Activated CD4-positive, alpha-beta T cell treated with anti-CD3 and anti-CD28 coated beads for 36 hours (primary cell): ENCODE measurements at regions of chr7 and their contacts with region 1.

Region 1: DNA sequence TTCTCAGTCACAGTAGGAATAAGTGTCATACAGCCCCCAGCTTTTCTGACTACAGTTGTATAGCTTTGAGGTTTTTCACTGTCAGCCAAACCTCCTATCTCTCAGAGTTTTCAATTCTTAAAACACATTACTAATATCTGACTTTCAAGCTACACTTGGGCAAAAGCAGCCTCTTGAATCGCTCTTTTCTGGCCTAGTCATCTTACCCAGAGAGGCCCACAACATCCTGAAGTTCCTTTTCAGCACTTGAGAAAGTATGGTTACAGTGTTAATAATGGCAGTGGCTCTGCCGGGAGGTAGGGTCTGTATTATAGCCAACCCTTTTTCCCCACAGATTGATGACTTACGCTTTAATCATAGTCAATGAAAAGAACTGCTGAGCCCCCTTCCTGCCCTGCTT is 181.0 kb downstream of the LRRC4 start:
- DNase-seq: peak; percentile 61
- ATAC-seq: peak; percentile 95
- H3K4me3 Mint-ChIP-seq: no peak overlapping the region
- H3K27ac Mint-ChIP-seq: peak overlapping the region; percentile 78
- H3K4me1 Mint-ChIP-seq: peaks cover 50% of the 10 kb centered on the region
- H3K27me3 Mint-ChIP-seq: no peaks in the 10 kb centered on the region

Region 2: DNA sequence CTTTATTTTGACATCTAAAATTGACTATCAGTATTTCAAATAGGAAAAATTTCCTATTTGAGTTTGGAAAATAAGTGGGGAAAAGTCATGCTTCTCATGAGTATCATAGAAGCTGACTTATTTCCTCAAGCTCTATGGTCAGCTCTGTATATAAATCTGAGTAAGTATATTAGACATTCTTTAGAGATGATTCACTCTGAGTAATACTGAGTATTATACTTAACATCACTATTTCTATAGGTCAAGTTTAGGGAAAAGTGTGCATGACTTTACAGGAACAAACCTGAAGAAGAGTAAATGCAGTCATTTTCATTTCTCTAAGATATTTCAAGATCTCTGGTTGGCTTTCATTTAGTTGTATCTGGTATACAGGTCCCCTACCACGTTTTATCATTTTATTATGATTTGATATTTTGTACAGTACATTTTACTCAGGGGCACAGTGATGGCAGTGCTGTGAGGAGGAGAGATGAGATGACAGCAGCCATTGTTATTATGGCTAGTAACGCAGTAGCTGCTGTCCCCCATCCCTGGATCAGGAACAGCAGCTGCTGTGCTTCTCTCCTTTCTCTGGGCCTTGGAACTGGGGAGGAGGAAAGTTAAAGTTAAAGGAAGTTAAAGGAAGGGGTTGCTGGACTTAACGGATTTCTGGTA is 183.1 kb before region 1 on chr7:
- CTCF ChIA-PET with region 1: no interaction called
- POLR2A ChIA-PET with region 1: no interaction called
- intact Hi-C with region 1: no loop called
- DNase-seq: no peak
- ATAC-seq: peak; percentile 84
- H3K4me3 Mint-ChIP-seq: peak overlapping the region; percentile 28
- H3K27ac Mint-ChIP-seq: peak overlapping the region; percentile 93
- H3K4me1 Mint-ChIP-seq: peaks cover 54% of the 10 kb centered on the region
- H3K27me3 Mint-ChIP-seq: no peaks in the 10 kb centered on the region

Region 3: DNA sequence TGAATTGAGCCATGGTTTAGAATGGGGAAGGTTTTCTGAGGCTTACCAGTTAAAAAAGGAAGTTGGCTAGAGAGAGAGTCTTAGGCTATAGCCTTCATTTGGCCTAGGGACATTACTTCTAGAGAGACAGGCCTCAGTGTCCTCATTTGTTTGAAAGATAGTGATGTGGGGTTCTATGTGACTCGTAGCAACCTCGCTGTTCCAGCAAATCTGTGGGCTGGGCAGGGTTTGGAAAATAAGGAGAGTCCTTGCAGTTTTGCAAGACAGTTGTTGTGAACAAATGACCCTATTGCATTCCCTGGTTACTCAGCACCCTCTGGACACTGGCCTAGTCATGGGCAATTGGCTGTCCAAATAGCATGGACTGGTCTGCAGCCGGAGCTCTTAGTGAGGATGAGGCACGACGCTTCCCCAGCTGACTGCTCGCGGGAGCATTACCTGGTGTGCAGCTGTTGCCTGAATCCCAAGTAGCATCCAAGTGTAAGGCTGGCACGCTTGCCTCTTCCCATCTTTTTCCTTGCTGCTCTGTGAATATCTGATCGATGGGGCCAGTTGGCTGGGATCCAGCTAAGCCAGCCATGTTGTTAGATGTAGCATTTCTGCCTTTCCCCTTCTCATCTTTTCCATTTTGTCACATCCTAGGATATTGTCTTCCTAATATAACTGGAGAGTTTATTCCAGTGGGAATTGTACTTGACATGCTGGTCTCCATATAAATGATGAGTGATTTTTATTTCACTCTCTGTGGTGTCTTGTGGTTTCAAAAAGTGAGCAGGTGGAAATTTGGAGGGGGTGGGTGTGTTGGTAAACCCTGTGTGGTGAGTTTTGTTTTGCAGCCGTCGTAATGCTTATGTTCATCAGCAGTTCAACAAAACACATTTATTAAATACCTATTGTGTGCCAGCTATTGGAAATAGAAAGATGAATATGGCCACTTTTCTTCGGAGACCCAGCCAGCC is 98.4 kb before region 1 on chr7:
- CTCF ChIA-PET with region 1: no interaction called
- POLR2A ChIA-PET with region 1: no interaction called
- intact Hi-C with region 1: loop called in 1 of 2 experiments (anchors 2 kb)
- DNase-seq: peak; percentile 11
- ATAC-seq: no peak
- H3K4me3 Mint-ChIP-seq: no peak overlapping the region
- H3K27ac Mint-ChIP-seq: no peak overlapping the region
- H3K4me1 Mint-ChIP-seq: peaks cover 45% of the 10 kb centered on the region
- H3K27me3 Mint-ChIP-seq: no peaks in the 10 kb centered on the region

Region 4: DNA sequence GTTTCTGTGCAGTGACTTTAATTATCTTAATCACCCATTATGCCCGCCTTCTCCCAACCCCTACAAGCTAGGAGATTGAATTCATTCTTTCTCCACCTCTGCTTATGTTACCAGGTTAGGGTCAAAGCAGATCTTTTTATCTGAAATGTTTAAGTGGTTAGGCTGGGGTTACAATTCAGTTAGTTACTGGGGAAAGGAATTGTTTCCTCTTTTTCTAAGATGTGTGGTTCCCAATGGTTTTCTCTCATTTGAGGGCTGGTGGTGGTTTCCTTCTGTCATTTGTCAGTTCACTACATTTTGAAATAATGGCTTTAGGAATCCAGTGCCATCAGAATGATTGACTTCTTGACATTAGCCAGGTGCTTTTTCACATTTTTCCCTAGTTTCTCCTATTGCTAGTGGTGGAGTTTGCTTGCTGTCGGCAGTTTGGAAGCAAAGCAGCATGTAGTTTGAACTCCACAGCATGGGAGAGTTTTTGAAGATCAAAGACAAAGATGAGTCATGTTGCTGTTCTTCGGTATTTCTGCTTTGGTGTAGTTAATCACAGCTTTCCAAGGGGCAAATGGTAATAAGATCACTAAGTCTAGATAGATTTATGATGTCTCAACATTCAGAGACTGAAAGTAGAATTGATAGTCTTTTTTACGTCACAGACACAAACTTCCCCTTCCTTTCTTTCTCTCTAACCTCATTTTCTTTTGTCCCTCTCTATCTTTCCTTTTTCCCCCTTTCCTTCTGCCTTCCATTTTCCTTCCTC is 30.0 kb before region 1 on chr7:
- CTCF ChIA-PET with region 1: no interaction called
- POLR2A ChIA-PET with region 1: no interaction called
- intact Hi-C with region 1: loop called in 1 of 2 experiments (anchors 1 kb)
- DNase-seq: no peak
- ATAC-seq: peak; percentile 93
- H3K4me3 Mint-ChIP-seq: peak overlapping the region; percentile 4
- H3K27ac Mint-ChIP-seq: peak overlapping the region; percentile 80
- H3K4me1 Mint-ChIP-seq: peaks cover 34% of the 10 kb centered on the region
- H3K27me3 Mint-ChIP-seq: no peaks in the 10 kb centered on the region

Region 5: DNA sequence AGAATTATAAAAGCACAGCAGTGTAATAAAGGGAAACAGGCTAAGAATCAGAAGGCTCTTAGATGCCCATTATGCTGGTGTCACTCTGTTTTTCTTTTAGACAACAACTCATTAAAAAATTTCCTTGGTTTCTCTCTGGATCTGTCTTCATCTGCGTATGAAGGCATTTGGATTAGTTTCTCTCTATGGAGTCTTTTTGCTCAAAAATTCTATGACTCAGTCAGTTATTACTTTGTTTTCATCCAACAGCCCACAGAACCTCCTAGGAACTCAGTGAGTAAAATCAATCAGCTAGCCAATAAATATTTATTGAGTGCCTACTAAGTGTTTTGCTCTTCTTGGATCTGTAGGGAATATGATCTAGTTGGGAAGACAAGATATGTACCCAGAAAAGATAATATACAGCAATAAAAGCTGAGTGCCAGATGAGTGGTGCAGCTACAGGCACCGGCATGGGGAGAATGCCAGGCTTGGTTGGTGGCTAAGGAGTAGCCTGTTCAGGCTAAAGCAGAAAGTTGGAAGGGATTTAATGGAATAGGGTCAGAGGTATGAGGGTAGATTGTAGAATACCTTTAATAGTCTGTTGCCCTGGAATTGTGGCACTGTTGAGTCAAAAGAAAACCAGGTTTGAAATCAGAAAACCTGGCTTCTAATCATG is 24.9 kb after region 1 on chr7:
- CTCF ChIA-PET with region 1: no interaction called
- POLR2A ChIA-PET with region 1: interaction called, 5 read pairs
- intact Hi-C with region 1: loop called in 1 of 2 experiments (anchors 1 kb)
- DNase-seq: no peak
- ATAC-seq: no peak
- H3K4me3 Mint-ChIP-seq: no peak overlapping the region
- H3K27ac Mint-ChIP-seq: no peak overlapping the region
- H3K4me1 Mint-ChIP-seq: peaks cover 22% of the 10 kb centered on the region
- H3K27me3 Mint-ChIP-seq: no peaks in the 10 kb centered on the region

Region 6: GRCh38 chr7:128031901-128032604 is 181.9 kb after region 1 on chr7:
- CTCF ChIA-PET with region 1: no interaction called
- POLR2A ChIA-PET with region 1: no interaction called
- intact Hi-C with region 1: loop called in 1 of 2 experiments (anchors 5 kb)
- DNase-seq: peak; percentile 81
- ATAC-seq: peak; percentile 98
- H3K4me3 Mint-ChIP-seq: peak overlapping the region; percentile 64
- H3K27ac Mint-ChIP-seq: no peak overlapping the region
- H3K4me1 Mint-ChIP-seq: peaks cover 27% of the 10 kb centered on the region
- H3K27me3 Mint-ChIP-seq: no peaks in the 10 kb centered on the region

Region 7: DNA sequence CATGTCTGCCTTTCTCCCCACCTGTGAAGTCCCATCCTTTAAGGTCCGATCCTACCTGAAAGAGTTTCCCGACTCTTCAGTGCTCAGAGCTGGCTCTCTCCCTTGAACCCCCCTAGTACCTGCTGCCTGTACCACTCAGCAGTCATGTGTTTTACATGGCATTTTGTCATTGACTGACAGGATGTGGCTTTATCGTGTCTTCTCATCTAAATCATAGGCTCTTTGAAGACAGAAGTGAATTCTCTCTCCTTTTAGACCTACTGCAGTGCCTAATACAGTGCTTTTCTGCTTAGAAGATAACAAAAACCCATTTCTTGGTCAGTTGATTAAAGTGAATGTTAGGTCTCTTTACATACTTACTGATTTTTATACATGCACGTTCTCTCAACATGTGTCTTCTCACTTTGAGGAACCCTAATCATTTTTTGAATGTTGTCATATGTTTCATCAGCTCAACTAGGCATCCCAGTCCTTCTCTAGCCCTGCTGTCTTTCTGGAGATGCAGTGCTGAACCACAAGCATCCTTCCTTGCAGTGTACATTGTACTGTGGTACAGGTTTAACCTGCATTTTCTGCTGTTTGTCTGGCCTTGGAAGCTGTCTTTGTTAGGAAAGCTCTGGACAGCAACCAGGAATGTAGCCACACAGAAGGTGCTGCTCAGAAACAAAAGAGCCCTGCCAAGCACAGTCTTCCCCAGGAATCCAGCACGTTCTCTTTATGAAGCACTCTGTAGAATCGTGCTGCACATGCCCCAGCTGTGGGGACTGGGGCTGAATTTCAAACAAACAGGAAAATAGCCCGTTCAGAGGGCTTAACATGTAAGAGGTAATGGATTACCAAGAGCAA is 209.2 kb after region 1 on chr7:
- CTCF ChIA-PET with region 1: no interaction called
- POLR2A ChIA-PET with region 1: no interaction called
- intact Hi-C with region 1: no loop called
- DNase-seq: no peak
- ATAC-seq: peak; percentile 85
- H3K4me3 Mint-ChIP-seq: no peak overlapping the region
- H3K27ac Mint-ChIP-seq: peak overlapping the region; percentile 53
- H3K4me1 Mint-ChIP-seq: peaks cover 52% of the 10 kb centered on the region
- H3K27me3 Mint-ChIP-seq: no peaks in the 10 kb centered on the region